Adrenal gland (tissue), 19 donors: ENCODE measurements at regions of chr18 and their contacts with region 1.

Region 1: DNA sequence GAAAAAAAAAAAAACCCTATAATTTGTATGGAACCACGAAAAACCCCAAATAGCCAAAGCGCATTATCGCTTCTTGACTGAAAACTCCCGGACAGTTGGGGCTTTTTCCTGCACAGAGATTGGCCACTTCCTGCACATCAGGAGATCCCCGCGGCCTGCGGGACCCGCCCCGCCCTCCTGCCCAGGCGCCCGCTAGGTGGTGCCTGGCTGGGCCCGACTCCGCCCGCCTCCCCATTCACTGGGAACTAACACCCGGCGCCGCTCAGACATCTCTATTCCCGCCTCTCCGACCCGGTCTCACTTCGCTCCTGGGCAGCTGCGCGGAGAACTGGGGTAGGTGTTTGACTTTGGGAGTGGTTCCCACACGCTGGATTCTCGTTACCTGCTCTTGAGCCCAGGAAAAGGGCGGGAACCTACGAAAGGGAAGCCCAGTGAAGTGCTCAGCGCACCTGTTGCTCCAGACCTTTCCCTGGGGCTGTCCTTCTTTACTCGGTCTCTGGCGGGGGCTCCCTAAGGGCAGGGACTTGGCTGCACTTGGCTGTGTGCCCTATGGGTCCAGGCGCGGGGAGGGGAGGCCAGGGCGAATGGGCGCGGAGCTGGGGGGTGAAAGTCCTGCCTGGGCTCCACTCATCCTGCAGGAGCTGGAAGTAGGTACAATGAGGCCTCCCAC is at the start of gene HMSD:
- DNase-seq: peak in 3 of 7 donors; percentile 24 to 52 (median 35)
- H3K4me3 ChIP-seq: no peak within 1 kb of the TSS
- H3K27ac ChIP-seq: no peak within 1 kb of the TSS
- H3K4me1 ChIP-seq: peaks cover 0 to 3% of the 10 kb centered on the region in 2 donors
- H3K27me3 ChIP-seq: peaks cover 26% of the 10 kb centered on the region
- CTCF ChIP-seq: peak in 3 of 6 experiments; percentile 5 to 22 (median 14)
- POLR2A ChIP-seq: no peak
- total RNA-seq, gene HMSD: 0.57 TPM in 1 of 9 donors, not detected in the others

Region 2: GRCh38 chr18:63511286-63511685 is 437.9 kb before region 1 on chr18:
- intact Hi-C with region 1: no loop called
- DNase-seq: peak in 5 of 7 donors; percentile 30 to 44 (median 39)
- H3K4me3 ChIP-seq: no peak overlapping the region
- H3K27ac ChIP-seq: no peak overlapping the region
- H3K4me1 ChIP-seq: no peaks in the 10 kb centered on the region
- H3K27me3 ChIP-seq: no peaks in the 10 kb centered on the region
- CTCF ChIP-seq: peak; percentile 16 to 53 (median 41)
- POLR2A ChIP-seq: no peak

Region 3: DNA sequence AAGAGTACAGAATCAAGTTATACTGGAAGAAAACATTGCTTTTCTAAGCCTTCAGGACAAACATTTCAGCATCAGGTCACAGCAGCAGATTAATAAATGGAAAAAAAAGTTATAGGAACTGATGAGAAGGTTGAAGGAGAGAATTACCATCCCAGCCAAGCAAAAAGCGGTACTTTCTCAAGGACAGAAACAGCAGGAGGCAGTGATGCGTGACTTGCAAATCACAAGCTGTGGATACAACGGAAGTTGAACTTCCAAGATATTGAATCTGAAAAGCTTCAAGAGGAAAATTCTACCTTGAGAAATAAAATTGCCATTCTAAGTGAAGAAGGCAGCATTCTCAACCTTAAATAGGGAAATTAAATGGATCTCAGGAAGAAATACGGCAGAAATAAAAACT is 425.5 kb before region 1 on chr18:
- intact Hi-C with region 1: loop called in 1 of 2 experiments (anchors 10 kb)
- DNase-seq: no peak
- H3K4me3 ChIP-seq: no peak overlapping the region
- H3K27ac ChIP-seq: no peak overlapping the region
- H3K4me1 ChIP-seq: no peaks in the 10 kb centered on the region
- H3K27me3 ChIP-seq: peaks cover 23% of the 10 kb centered on the region
- CTCF ChIP-seq: no peak
- POLR2A ChIP-seq: no peak

Region 4: GRCh38 chr18:63775166-63775730 is 174.0 kb before region 1 on chr18 and contains the start of gene SERPINB7:
- intact Hi-C with region 1: no loop called
- DNase-seq: no peak
- H3K4me3 ChIP-seq: no peak within 1 kb of the TSS
- H3K27ac ChIP-seq: no peak within 1 kb of the TSS
- H3K4me1 ChIP-seq: no peaks in the 10 kb centered on the region
- H3K27me3 ChIP-seq: no peaks in the 10 kb centered on the region
- CTCF ChIP-seq: no peak
- POLR2A ChIP-seq: no peak
- total RNA-seq, gene SERPINB7: 0.11 TPM in 1 of 9 donors, not detected in the others

Region 5: GRCh38 chr18:63848159-63848558 is 101.0 kb before region 1 on chr18:
- intact Hi-C with region 1: no loop called
- DNase-seq: no peak
- H3K4me3 ChIP-seq: no peak overlapping the region
- H3K27ac ChIP-seq: no peak overlapping the region
- H3K4me1 ChIP-seq: no peaks in the 10 kb centered on the region
- H3K27me3 ChIP-seq: no peaks in the 10 kb centered on the region
- CTCF ChIP-seq: peak; percentile 22 to 44 (median 42)
- POLR2A ChIP-seq: no peak